MCF 10A (cell line): ENCODE measurements at regions of chr12 and their contacts with region 1.

Region 1: DNA sequence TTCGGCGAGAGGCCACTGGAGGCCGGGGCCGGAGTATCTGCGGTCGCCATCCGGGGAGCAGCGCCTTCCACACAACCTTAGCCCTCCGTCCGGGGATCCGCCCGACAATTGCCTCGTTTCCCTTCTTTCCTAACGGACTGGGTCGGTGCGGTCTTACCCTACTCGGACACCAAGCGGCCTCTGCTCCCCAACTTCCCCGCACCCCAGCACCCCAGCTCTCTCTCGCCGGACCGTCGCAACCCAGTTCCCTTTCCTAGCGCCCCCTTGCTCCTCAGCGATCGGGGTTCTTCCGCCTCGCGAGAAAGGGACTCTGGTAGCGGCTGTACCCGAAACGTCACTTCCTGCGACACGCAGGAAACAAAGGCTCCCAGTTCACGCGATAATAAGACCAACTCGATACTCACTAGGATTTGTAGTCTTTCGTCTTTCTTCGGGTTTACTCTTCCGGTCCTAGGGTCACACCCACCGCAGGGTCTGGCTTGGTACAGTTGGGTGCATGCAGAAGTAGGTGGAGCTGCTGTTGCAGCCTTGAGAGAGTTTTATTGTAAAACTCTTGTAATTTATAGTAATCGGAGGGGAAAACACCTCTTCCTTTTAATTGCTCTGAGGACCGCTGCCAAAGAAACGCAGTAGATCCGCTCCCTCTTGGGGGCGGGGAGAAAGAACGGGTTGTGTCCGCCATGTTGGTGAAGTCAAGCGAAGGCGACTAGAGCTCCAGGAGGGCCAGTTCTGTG is at the start of gene ZFC3H1:
- DNase-seq: peak; percentile 99
- H3K4me3 Mint-ChIP-seq: peak within 1 kb of the TSS; percentile 100
- H3K27ac Mint-ChIP-seq: peak within 1 kb of the TSS; percentile 100
- H3K4me1 Mint-ChIP-seq: peaks cover 32% of the 10 kb centered on the region
- H3K27me3 Mint-ChIP-seq: no peaks in the 10 kb centered on the region
- CTCF ChIP-seq: peak; percentile 9
- total RNA-seq, gene ZFC3H1: 55.3 and 55.8 TPM in 2 replicates

Region 2: GRCh38 chr12:71626098-71626497 is 37.6 kb before region 1 on chr12:
- CTCF ChIA-PET with region 1: interaction called, 3 read pairs
- POLR2A ChIA-PET with region 1: interaction called, 13 read pairs
- intact Hi-C with region 1: no loop called
- DNase-seq: no peak
- H3K4me3 Mint-ChIP-seq: no peak overlapping the region
- H3K27ac Mint-ChIP-seq: no peak overlapping the region
- H3K4me1 Mint-ChIP-seq: peaks cover 10% of the 10 kb centered on the region
- H3K27me3 Mint-ChIP-seq: no peaks in the 10 kb centered on the region
- CTCF ChIP-seq: no peak

Region 3: GRCh38 chr12:71685914-71686665 is 22.4 kb after region 1 on chr12 and contains the start of gene TMEM19:
- CTCF ChIA-PET with region 1: interaction called, 19 read pairs
- POLR2A ChIA-PET with region 1: interaction called, 248 read pairs
- intact Hi-C with region 1: loop called (anchors 1 kb)
- DNase-seq: peak; percentile 89
- H3K4me3 Mint-ChIP-seq: peak within 1 kb of the TSS; percentile 87
- H3K27ac Mint-ChIP-seq: peak within 1 kb of the TSS; percentile 76
- H3K4me1 Mint-ChIP-seq: peaks cover 16% of the 10 kb centered on the region
- H3K27me3 Mint-ChIP-seq: no peaks in the 10 kb centered on the region
- CTCF ChIP-seq: peak; percentile 11
- total RNA-seq, gene TMEM19: 7.2 and 7.3 TPM in 2 replicates

Region 4: GRCh38 chr12:71710276-71711125 is 46.8 kb after region 1 on chr12:
- CTCF ChIA-PET with region 1: interaction called, 6 read pairs
- POLR2A ChIA-PET with region 1: interaction called, 19 read pairs
- intact Hi-C with region 1: loop called (anchors 2 kb)
- DNase-seq: peak; percentile 95
- H3K4me3 Mint-ChIP-seq: peak overlapping the region; percentile 2
- H3K27ac Mint-ChIP-seq: peak overlapping the region; percentile 91
- H3K4me1 Mint-ChIP-seq: peaks cover 16% of the 10 kb centered on the region
- H3K27me3 Mint-ChIP-seq: no peaks in the 10 kb centered on the region
- CTCF ChIP-seq: no peak

Region 5: GRCh38 chr12:71731751-71732712 is 68.3 kb after region 1 on chr12:
- CTCF ChIA-PET with region 1: interaction called, 4 read pairs
- POLR2A ChIA-PET with region 1: interaction called, 10 read pairs
- intact Hi-C with region 1: no loop called
- DNase-seq: no peak
- H3K4me3 Mint-ChIP-seq: no peak overlapping the region
- H3K27ac Mint-ChIP-seq: no peak overlapping the region
- H3K4me1 Mint-ChIP-seq: peaks cover 6% of the 10 kb centered on the region
- H3K27me3 Mint-ChIP-seq: no peaks in the 10 kb centered on the region
- CTCF ChIP-seq: no peak

Region 6: GRCh38 chr12:71840231-71840847 is 176.6 kb after region 1 on chr12:
- CTCF ChIA-PET with region 1: no interaction called
- POLR2A ChIA-PET with region 1: interaction called, 30 read pairs
- intact Hi-C with region 1: loop called (anchors 10 kb)
- DNase-seq: peak; percentile 76
- H3K4me3 Mint-ChIP-seq: peak overlapping the region; percentile 94
- H3K27ac Mint-ChIP-seq: peak overlapping the region; percentile 100
- H3K4me1 Mint-ChIP-seq: peaks cover 14% of the 10 kb centered on the region
- H3K27me3 Mint-ChIP-seq: no peaks in the 10 kb centered on the region
- CTCF ChIP-seq: no peak